ENCODE measurements at regions of chr2 and their contacts with region 1.

Region 1: DNA sequence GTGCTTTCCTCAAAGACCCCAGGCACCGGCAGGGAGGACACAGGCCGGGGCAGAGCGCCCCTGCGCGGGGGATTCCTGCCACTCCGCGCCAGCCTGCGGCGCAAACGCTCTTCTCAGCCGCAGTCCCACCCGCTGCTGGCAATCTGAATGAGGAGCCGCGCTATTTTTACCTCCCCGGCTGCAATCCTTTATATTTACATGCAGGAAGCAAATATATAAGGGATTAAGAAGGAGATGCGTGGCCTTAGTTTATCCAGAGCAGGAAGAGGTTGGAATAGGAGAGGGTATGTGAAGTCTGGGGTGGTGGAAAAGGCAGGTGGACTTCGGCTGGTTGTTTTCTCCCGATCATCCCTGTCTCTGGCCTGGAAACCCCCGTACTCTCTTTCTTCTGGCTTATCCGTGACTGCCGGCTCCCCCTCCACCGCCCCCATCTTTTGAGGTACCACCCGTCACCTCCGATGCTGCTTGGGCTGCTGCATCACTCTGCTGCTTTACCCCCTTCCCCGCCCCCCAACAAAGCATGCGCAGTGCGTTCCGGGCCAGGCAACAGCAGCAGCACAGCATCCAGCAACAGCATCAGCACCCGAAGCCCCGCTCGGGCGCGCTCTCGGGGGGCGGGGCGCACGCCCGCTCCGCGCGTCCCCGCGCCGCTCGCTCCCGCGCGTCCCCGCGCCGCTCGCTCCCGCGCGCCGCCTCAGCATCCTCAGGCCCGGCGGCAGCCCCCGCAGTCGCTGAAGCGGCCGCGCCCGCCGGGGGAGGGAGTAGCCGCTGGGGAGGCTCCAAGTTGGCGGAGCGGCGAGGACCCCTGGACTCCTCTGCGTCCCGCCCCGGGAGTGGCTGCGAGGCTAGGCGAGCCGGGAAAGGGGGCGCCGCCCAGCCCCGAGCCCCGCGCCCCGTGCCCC is at the start of gene ADAM23:
- DNase-seq: peak; percentile 60
- H3K4me3 ChIP-seq: peak within 1 kb of the TSS; percentile 40 to 56 (median 55)
- H3K27ac ChIP-seq: no peak within 1 kb of the TSS
- H3K4me1 ChIP-seq: peaks cover 9% of the 10 kb centered on the region
- H3K27me3 ChIP-seq: peaks cover 2 to 8% of the 10 kb centered on the region in 2 experiments
- CTCF ChIP-seq: peak; percentile 30 to 63
- POLR2A ChIP-seq: peak; percentile 80
- total RNA-seq, gene ADAM23: 20.6 and 38.5 TPM in 2 replicates

Region 2: GRCh38 chr2:206159346-206160124 is 283.5 kb before region 1 on chr2 and contains the starts of genes EEF1B2 and NDUFS1:
- CTCF ChIA-PET with region 1: no interaction called
- POLR2A ChIA-PET with region 1: no interaction called
- dilution Hi-C with region 1: no loop called
- intact Hi-C with region 1: loop called (anchors 1 kb)
- DNase-seq: peak; percentile 99
- H3K4me3 ChIP-seq: peak within 1 kb of the TSS; percentile 72 to 97 (median 96)
- H3K27ac ChIP-seq: peak within 1 kb of the TSS; percentile 67
- H3K4me1 ChIP-seq: peaks cover 27% of the 10 kb centered on the region
- H3K27me3 ChIP-seq: no peaks in the 10 kb centered on the region
- CTCF ChIP-seq: no peak
- POLR2A ChIP-seq: peak; percentile 89
- total RNA-seq, gene EEF1B2: 558 and 576 TPM in 2 replicates
- total RNA-seq, gene NDUFS1: 93.2 and 95.5 TPM in 2 replicates

Region 3: GRCh38 chr2:206305523-206306245 is 137.4 kb before region 1 on chr2:
- CTCF ChIA-PET with region 1: no interaction called
- POLR2A ChIA-PET with region 1: no interaction called
- dilution Hi-C with region 1: no loop called
- intact Hi-C with region 1: loop called (anchors 10 kb)
- DNase-seq: no peak
- H3K4me3 ChIP-seq: no peak overlapping the region
- H3K27ac ChIP-seq: no peak overlapping the region
- H3K4me1 ChIP-seq: peaks cover 11% of the 10 kb centered on the region
- H3K27me3 ChIP-seq: peaks cover 0 to 12% of the 10 kb centered on the region in 2 experiments
- CTCF ChIP-seq: no peak
- POLR2A ChIP-seq: no peak

Region 4: DNA sequence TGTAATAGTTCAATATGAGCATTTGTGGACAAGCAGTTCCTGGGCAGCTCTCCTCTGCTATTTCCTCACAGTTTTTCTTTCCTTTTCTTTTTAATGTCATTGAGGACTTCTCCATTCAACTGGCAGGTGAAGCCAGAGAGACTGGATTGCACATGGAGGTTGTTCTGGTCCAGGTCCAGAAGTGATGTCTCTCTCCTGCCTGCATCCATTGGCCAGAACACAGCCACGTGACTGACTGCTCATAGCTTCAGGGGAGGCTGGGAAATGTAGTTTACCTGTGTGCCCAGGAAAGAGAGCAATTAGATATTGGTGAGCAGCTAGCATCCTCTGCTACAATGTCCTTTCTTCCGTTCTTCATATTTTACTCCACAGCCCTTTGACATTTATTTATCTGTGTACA is 19.9 kb before region 1 on chr2:
- CTCF ChIA-PET with region 1: interaction called, 5 read pairs
- POLR2A ChIA-PET with region 1: no interaction called
- dilution Hi-C with region 1: no loop called
- intact Hi-C with region 1: loop called (anchors 1 kb)
- DNase-seq: peak; percentile 62
- H3K4me3 ChIP-seq: no peak overlapping the region
- H3K27ac ChIP-seq: peak overlapping the region; percentile 25
- H3K4me1 ChIP-seq: peaks cover 32% of the 10 kb centered on the region
- H3K27me3 ChIP-seq: no peaks in the 10 kb centered on the region
- CTCF ChIP-seq: no peak
- POLR2A ChIP-seq: no peak

Region 5: DNA sequence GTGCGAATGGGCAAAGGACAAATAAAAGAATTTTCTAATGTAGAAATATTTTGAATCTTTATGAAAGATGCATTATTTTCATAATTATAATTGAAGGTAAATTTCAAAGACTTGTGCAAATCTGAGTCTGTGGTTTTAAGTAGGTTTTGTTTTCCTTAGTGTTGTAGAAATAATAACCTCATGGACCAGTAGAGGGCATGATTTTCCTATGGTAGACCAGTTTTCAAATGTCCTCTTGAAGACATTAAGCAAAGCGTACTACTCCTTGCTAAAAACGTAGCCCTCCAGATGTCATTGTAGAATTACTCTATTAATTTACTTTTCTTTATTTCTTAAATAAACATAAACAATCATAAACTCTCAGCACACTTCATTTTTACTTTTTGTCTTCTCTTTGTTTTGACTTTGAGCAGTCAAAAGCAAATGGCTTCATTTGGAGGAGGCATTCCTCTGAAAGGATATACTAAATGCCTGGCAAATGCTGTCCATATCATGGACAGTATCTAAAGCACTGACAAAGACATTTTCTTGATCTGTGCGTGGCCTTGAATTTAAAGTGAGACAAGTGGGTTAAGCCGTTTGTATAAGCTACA is 113.4 kb after region 1 on chr2:
- CTCF ChIA-PET with region 1: interaction called, 5 read pairs
- POLR2A ChIA-PET with region 1: no interaction called
- dilution Hi-C with region 1: no loop called
- intact Hi-C with region 1: loop called (anchors 5 kb)
- DNase-seq: peak; percentile 72
- H3K4me3 ChIP-seq: no peak overlapping the region
- H3K27ac ChIP-seq: no peak overlapping the region
- H3K4me1 ChIP-seq: no peaks in the 10 kb centered on the region
- H3K27me3 ChIP-seq: no peaks in the 10 kb centered on the region
- CTCF ChIP-seq: peak; percentile 30 to 39
- POLR2A ChIP-seq: no peak